ENCODE measurements at regions of chr7 and their contacts with region 1.

Region 1: GRCh38 chr7:121366852-121367431 is 29.2 kb downstream of the FAM3C start:
- DNase-seq: peak in 1 of 2 donors; percentile 74
- ATAC-seq: peak; percentile 52 to 80 (median 54)
- H3K4me3 ChIP-seq: no peak overlapping the region
- H3K4me3 Mint-ChIP-seq: no peak overlapping the region
- H3K27ac ChIP-seq: no peak overlapping the region
- H3K27ac Mint-ChIP-seq: peak overlapping the region in 1 of 2 donors; percentile 69
- H3K4me1 ChIP-seq: peaks cover 12% of the 10 kb centered on the region
- H3K4me1 Mint-ChIP-seq: peaks cover 12 to 28% of the 10 kb centered on the region in 2 donors
- H3K27me3 ChIP-seq: no peaks in the 10 kb centered on the region
- H3K27me3 Mint-ChIP-seq: no peaks in the 10 kb centered on the region
- CTCF ChIP-seq: peak; percentile 87

Region 2: DNA sequence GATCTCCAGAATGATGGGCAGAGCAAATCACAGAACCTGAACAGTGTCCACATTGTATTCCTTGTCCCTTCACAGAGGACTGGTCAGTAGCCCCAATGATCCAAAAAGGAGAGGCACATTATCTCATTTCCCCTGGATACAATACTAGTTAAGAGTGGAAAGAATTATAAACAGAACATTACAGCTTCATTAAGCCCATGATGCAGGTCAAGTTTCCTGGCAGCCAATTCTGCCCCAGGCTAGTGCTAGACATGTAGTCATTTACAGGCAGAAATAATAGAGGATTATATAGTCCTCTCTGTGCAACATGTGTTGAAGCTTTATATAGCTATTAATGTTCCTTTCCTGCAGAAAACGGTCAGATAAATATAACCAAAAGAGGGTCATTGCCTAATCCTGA is 162.4 kb before region 1 on chr7:
- intact Hi-C with region 1: no loop called
- DNase-seq: no peak
- ATAC-seq: no peak
- H3K4me3 ChIP-seq: no peak overlapping the region
- H3K4me3 Mint-ChIP-seq: no peak overlapping the region
- H3K27ac ChIP-seq: no peak overlapping the region
- H3K27ac Mint-ChIP-seq: no peak overlapping the region
- H3K4me1 ChIP-seq: no peaks in the 10 kb centered on the region
- H3K4me1 Mint-ChIP-seq: no peaks in the 10 kb centered on the region
- H3K27me3 ChIP-seq: no peaks in the 10 kb centered on the region
- H3K27me3 Mint-ChIP-seq: no peaks in the 10 kb centered on the region
- CTCF ChIP-seq: no peak

Region 3: GRCh38 chr7:121395961-121396757 is 29.2 kb after region 1 on chr7 and contains the start of gene FAM3C:
- intact Hi-C with region 1: loop called (anchors 1 kb)
- DNase-seq: peak; percentile 86
- ATAC-seq: peak; percentile 89 to 96 (median 91)
- H3K4me3 ChIP-seq: peak within 1 kb of the TSS; percentile 68
- H3K4me3 Mint-ChIP-seq: peak within 1 kb of the TSS; percentile 92
- H3K27ac ChIP-seq: peak within 1 kb of the TSS; percentile 76
- H3K27ac Mint-ChIP-seq: peak within 1 kb of the TSS; percentile 83 to 90
- H3K4me1 ChIP-seq: peaks cover 2% of the 10 kb centered on the region
- H3K4me1 Mint-ChIP-seq: peaks cover 26 to 28% of the 10 kb centered on the region in 2 donors
- H3K27me3 ChIP-seq: no peaks in the 10 kb centered on the region
- H3K27me3 Mint-ChIP-seq: no peaks in the 10 kb centered on the region
- CTCF ChIP-seq: peak; percentile 97
- total RNA-seq, gene FAM3C: 24.3 to 42.1 (median 37.0) TPM

Region 4: DNA sequence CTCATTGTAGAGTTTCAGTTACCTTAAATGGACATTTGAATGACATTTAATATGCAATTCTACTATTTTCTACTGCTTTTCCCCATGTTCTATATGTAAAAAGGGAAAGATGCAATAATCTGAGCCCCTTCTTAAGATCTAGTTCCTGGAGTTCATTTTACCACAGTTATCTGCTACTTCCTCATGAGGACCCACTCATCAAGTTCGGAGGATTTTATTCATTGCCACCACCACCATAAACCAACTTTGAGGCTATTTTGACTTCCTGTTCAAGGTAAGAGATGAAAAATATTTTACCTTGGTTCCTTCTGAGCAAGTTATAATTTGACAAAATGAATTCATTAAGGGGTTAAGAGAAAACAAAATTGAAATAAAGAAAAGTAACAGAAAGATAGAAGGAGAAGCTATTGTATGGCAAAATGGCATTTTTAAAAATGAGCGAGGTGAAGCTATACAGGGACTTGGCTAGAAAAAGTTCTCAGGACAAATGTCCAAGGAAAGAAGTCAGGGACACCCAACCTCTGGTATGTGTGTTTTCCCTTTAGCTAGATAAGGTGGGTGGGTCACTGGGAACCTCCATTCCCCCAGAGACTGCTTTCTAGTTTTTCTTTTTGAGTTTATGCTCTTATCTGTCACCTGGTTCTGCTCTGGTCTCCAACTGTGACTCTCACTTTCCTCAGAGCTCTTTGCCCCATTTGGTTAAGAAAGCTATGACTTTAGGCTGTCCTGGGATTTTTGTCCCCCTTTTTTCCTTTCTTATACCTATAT is 44.1 kb after region 1 on chr7:
- intact Hi-C with region 1: no loop called
- DNase-seq: no peak
- ATAC-seq: no peak
- H3K4me3 ChIP-seq: no peak overlapping the region
- H3K4me3 Mint-ChIP-seq: no peak overlapping the region
- H3K27ac ChIP-seq: no peak overlapping the region
- H3K27ac Mint-ChIP-seq: no peak overlapping the region
- H3K4me1 ChIP-seq: no peaks in the 10 kb centered on the region
- H3K4me1 Mint-ChIP-seq: peaks cover 5 to 6% of the 10 kb centered on the region in 2 donors
- H3K27me3 ChIP-seq: no peaks in the 10 kb centered on the region
- H3K27me3 Mint-ChIP-seq: peaks cover 9 to 13% of the 10 kb centered on the region in 2 donors
- CTCF ChIP-seq: no peak

Region 5: DNA sequence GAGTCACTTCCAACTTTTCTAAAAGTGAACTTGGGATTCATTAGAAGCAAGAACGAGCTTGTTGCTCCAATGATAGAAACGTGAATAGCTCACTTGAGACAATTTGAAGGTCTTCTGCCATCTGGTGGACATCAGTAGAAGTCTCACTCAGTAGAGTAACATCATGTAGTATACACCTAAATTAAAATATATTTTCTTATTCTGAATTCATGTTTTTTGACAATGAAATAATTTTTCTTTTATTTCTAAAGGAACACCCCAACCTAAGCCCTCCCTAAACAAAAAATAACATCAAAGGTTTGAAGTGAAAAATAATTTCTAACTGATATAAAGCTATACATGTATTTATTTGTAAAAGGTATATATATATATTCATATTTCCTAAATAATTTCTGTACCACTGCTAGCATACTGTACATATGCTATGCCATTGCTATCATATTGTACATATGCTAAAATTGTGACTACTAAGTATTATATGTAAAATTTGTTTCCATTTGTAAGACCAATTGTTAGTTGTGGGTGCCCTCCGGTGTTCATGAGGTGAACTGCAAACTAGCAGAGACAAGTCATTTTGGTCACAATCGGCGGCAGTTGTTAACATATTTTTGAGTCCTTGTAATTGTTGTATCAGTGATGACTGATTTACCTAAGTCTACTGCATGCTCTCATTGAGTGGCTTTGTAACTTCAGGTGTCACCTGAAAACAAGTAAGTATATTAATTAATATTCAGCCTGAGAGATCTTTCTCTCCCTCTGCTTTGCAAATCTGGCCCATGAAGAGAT is 627.9 kb after region 1 on chr7:
- intact Hi-C with region 1: loop called (anchors 2 kb)
- DNase-seq: peak in 1 of 2 donors; percentile 37
- ATAC-seq: peak; percentile 52 to 76 (median 70)
- H3K4me3 ChIP-seq: no peak overlapping the region
- H3K4me3 Mint-ChIP-seq: no peak overlapping the region
- H3K27ac ChIP-seq: no peak overlapping the region
- H3K27ac Mint-ChIP-seq: no peak overlapping the region
- H3K4me1 ChIP-seq: no peaks in the 10 kb centered on the region
- H3K4me1 Mint-ChIP-seq: no peaks in the 10 kb centered on the region
- H3K27me3 ChIP-seq: no peaks in the 10 kb centered on the region
- H3K27me3 Mint-ChIP-seq: no peaks in the 10 kb centered on the region
- CTCF ChIP-seq: peak; percentile 69

Measured in natural killer cell (primary cell).